ENCODE measurements at regions of chr11 and their contacts with region 1.

Region 1: DNA sequence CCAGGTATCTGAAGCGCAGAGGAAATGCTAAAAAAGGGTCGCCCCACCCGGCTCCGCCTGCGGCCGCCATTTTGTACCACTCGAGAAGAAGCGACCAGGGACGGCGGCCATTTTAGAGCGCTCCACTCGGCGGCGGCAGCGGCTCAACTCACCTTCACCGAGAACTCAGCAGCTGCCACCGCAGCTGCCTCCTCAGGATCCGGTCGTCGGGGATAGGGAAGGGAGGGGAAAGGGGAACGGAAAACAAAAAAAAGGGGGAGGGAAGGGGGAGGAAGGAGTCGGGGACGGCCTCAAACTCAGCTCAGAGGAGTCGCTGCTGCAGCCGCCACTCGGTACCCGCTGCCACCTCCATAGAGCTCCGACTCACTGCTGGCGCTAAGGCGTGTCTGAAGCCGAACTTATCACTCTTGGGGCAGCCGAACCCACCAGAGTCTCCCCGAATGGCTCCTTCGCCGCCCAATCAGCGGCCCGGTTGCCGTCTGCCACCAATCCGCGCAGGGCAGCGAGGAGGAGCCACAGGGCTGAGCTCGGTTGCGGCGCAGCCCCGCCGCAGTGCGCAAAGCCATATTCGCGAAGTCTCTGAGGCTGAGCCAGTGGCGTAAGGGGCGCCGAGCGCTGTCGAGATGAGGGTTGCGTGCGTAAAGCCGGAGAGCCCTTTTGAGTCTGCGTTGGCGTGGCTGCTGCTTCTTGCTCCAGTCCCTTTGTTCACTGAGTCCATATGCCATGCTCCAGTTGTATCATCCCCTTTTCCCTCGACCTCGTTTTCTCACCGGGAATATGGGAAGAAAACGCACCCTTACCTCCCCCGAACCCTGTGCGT is at the start of gene EIF4G2:
- DNase-seq: peak; percentile 99
- ATAC-seq: peak; percentile 96 to 97
- total RNA-seq, gene EIF4G2: 665 to 793 TPM

Region 2: GRCh38 chr11:10899121-10899830 is 90.5 kb after region 1 on chr11:
- intact Hi-C with region 1: loop called in 1 of 2 experiments (anchors 5 kb)
- DNase-seq: peak; percentile 65
- ATAC-seq: peak; percentile 29 to 87